Heart right ventricle (tissue), 16 donors: ENCODE measurements at regions of chr7 and their contacts with region 1.

Region 1: DNA sequence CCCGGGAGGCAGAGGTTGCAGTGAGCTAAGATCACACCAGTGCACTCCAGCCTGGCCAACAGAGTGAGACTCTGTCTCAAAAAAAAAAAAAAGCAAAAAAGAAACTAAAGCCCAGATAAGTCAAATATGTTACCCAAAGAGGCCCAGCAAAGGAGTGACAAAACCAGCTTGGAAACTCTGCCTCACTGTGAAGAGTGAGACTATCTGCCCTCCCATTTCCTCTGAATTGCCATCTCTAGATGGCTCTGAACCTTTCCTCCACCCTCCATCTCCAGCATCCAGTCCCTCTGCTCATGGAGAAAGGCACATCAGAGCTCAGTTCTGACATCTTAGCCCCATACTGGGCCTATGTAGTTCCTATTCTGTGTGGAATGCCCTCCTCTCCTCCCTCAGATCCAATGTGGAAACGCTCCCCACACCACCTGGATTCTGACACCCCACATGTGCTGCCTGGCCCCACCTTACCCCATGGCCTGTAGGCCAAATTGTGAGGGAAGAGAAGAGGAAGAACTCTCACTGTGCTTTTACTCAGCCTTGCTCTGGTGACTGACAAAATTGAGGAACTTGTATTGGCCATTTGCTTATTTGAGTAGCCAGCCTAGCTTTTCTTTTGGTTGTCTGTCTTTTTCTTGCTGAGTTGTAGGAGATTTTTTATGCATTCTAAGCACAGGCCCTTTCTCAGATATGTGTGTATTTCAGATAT is 18.0 kb upstream of the NUDCD3 start:
- DNase-seq: no peak
- ATAC-seq: no peak
- H3K4me3 ChIP-seq: no peak overlapping the region
- H3K27ac ChIP-seq: no peak overlapping the region
- H3K4me1 ChIP-seq: no peaks in the 10 kb centered on the region
- H3K27me3 ChIP-seq: peaks cover 0 to 8% (median 0%) of the 10 kb centered on the region in 7 donors
- CTCF ChIP-seq: no peak

Region 2: DNA sequence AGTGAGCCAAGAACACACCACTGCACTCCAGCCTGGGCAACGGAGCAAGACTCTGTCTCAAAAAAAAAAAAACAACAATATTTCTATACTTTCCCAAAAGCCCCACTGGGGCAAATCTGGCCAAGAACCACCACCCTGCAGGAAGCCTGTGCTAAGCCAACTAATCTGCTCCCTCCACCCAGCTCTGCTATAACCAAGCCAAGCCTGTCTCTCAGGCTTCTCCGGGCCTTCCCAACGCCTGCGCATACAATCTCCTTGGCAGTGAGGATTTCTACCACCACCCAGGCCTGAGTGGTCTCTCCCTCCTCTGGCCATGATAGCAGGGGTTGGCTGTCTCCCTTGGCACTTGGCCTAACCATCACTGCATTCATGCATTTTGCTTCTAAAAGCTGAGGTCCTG is 51.0 kb after region 1 on chr7:
- intact Hi-C with region 1: loop called in 1 of 10 experiments (anchors 10 kb)
- DNase-seq: no peak
- ATAC-seq: no peak
- H3K4me3 ChIP-seq: no peak overlapping the region
- H3K27ac ChIP-seq: no peak overlapping the region
- H3K4me1 ChIP-seq: no peaks in the 10 kb centered on the region
- H3K27me3 ChIP-seq: no peaks in the 10 kb centered on the region
- CTCF ChIP-seq: no peak